ENCODE measurements at regions of chr1 and their contacts with region 1.

Region 1: GRCh38 chr1:67685067-67685557 is at the start of gene GADD45A:
- DNase-seq: peak; percentile 98
- H3K4me3 Mint-ChIP-seq: peak within 1 kb of the TSS; percentile 96
- H3K27ac Mint-ChIP-seq: peak within 1 kb of the TSS; percentile 89
- H3K4me1 Mint-ChIP-seq: peaks cover 40% of the 10 kb centered on the region
- H3K27me3 Mint-ChIP-seq: no peaks in the 10 kb centered on the region
- CTCF ChIP-seq: no peak
- total RNA-seq, gene GADD45A: 34.0 and 35.4 TPM in 2 replicates

Region 2: DNA sequence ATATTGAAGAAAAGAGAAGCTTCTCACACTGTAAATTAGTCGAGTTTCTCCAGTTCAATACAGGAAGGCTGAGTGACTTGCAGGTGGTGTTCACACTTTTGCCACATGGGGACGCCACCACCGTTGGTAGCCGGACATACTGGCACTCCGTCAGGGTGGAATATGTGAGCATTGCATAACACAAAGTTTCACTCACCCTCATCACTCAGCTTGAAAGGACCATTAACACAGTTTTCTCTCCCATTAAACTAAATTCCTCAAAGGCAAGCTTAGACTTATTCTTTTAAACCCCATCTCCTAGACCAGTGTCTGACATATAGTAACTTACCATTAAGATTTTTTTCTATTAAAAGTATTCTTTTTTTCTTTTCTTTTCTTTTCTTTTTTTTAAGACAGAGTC is 149.6 kb before region 1 on chr1:
- CTCF ChIA-PET with region 1: interaction called, 3 read pairs
- intact Hi-C with region 1: loop called (anchors 10 kb)
- DNase-seq: peak; percentile 89
- H3K4me3 Mint-ChIP-seq: no peak overlapping the region
- H3K27ac Mint-ChIP-seq: no peak overlapping the region
- H3K4me1 Mint-ChIP-seq: no peaks in the 10 kb centered on the region
- H3K27me3 Mint-ChIP-seq: no peaks in the 10 kb centered on the region
- CTCF ChIP-seq: peak; percentile 83

Region 3: GRCh38 chr1:67561704-67562113 is 123.4 kb before region 1 on chr1:
- CTCF ChIA-PET with region 1: interaction called, 4 read pairs
- intact Hi-C with region 1: loop called (anchors 1 kb)
- DNase-seq: peak; percentile 96
- H3K4me3 Mint-ChIP-seq: no peak overlapping the region
- H3K27ac Mint-ChIP-seq: no peak overlapping the region
- H3K4me1 Mint-ChIP-seq: peaks cover 32% of the 10 kb centered on the region
- H3K27me3 Mint-ChIP-seq: no peaks in the 10 kb centered on the region
- CTCF ChIP-seq: peak; percentile 80

Region 4: DNA sequence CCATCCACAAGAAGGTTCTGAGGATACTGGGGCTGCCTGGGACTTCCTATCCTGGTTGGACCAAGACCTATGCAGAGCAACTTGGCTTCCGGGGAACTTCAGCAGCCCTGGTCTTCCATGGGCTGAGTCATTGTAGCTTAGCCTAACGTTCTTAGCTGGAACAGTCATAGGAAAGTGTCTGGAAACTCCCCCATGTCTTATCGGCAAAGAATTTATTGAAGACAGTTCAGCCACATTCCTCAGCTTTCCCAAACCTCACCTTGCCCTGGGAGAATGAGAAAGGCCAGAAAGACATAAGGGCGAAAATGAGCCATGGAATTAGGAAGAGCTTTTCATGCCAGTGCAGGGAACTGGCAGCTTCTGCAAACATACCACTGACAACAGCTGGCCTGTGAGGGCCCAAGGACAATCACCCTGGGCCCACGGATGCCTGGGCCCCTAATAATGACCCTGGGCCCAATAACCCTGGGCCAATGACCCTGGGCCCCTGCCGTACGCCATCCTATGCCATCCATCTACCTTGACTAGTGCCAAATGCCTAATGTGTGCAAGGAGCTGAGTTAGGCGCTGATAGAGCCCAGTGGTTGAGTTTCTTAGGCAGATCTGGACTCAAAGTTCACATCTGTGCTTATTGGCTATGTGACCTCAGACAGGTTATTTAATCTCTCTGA is 114.5 kb before region 1 on chr1:
- CTCF ChIA-PET with region 1: interaction called, 5 read pairs
- intact Hi-C with region 1: loop called (anchors 2 kb)
- DNase-seq: peak; percentile 35
- H3K4me3 Mint-ChIP-seq: no peak overlapping the region
- H3K27ac Mint-ChIP-seq: peak overlapping the region; percentile 66
- H3K4me1 Mint-ChIP-seq: peaks cover 40% of the 10 kb centered on the region
- H3K27me3 Mint-ChIP-seq: no peaks in the 10 kb centered on the region
- CTCF ChIP-seq: no peak

Region 5: DNA sequence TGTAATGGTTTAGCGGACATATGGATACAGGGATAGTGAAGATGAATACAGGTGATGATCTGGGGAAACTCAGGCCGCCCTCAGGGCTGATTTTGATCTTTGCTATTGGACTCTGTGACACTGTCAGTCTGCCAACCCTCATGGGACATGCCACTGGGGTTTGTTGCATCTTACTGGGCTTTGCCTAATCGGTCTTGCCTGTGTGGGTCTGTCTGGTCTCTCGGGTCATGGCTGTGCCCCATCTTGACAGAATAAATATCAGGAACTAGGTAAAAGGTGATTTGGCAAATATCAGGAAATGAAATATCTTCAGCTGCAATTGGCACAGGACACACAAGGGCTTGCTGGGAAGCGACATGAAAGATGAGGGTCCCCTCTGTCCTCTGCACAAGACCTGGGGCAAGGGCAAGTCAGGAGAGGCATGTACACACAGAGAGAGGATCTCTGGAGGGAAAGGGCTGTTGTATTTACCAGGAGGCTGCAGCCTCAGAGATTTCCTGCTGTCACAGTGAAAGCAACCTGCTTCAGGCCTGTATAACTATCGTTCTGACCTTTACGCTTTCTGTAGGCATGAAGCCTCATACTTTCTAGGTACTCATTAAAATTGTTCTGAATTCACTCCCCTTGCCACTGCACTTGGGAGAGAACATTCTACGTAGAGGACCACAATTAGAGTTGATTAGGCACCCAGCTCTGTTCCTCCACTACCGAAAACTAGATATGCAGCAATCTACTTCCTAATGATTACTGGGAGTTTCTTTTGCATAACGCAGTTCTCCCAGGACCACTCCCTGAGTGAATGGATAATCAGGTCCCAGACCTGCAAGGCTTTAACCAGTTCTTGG is 52.1 kb before region 1 on chr1:
- CTCF ChIA-PET with region 1: no interaction called
- intact Hi-C with region 1: loop called (anchors 2 kb)
- DNase-seq: no peak
- H3K4me3 Mint-ChIP-seq: no peak overlapping the region
- H3K27ac Mint-ChIP-seq: no peak overlapping the region
- H3K4me1 Mint-ChIP-seq: peaks cover 54% of the 10 kb centered on the region
- H3K27me3 Mint-ChIP-seq: no peaks in the 10 kb centered on the region
- CTCF ChIP-seq: no peak

Region 6: DNA sequence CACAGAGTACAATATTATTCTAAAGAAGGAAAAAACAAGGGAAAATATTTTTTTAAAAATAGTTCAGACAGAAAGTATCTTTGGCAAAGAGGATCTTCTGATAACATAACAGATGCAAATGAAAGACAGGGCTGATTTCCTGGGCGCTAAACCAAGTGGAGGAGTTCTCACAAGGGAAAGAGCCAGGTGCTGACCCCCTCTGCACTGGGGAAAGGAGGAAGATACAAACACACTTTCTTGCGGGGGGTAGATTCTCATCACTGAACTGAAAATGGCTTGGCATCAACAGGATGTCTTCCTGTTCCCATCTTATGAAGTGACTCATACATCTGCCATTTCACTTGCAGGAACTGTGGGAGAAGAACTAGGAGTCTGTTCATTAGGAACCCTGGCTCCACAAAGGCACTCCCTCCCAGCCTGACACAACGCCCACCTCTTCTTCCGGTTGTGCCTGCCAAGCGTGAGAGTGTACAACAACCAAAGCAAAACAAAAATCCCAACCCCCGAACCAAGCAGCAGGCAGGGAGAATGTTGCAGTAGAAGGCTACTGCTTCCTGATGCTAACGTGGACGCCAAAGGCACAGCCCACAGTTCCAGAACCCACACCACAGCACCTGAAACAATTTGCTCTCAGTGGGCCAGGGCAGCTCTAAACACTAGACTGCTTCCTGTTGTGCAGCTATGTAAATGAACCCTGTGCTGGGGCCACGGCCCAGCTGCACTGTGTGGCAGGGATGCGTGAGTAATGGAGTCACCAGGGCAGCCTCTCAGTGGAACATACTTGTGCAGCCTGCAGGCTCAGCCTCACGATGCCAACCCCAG is 50.9 kb after region 1 on chr1:
- CTCF ChIA-PET with region 1: no interaction called
- intact Hi-C with region 1: no loop called
- DNase-seq: peak; percentile 74
- H3K4me3 Mint-ChIP-seq: peak overlapping the region; percentile 60
- H3K27ac Mint-ChIP-seq: peak overlapping the region; percentile 88
- H3K4me1 Mint-ChIP-seq: peaks cover 22% of the 10 kb centered on the region
- H3K27me3 Mint-ChIP-seq: no peaks in the 10 kb centered on the region
- CTCF ChIP-seq: no peak

Region 7: GRCh38 chr1:67748630-67749029 is 63.5 kb after region 1 on chr1:
- CTCF ChIA-PET with region 1: interaction called, 8 read pairs
- intact Hi-C with region 1: loop called (anchors 2 kb)
- DNase-seq: peak; percentile 28
- H3K4me3 Mint-ChIP-seq: peak overlapping the region; percentile 54
- H3K27ac Mint-ChIP-seq: peak overlapping the region; percentile 54
- H3K4me1 Mint-ChIP-seq: peaks cover 90% of the 10 kb centered on the region
- H3K27me3 Mint-ChIP-seq: no peaks in the 10 kb centered on the region
- CTCF ChIP-seq: no peak

Region 8: GRCh38 chr1:67760030-67760821 is 75.1 kb after region 1 on chr1:
- CTCF ChIA-PET with region 1: interaction called, 11 read pairs
- intact Hi-C with region 1: no loop called
- DNase-seq: peak; percentile 67
- H3K4me3 Mint-ChIP-seq: no peak overlapping the region
- H3K27ac Mint-ChIP-seq: no peak overlapping the region
- H3K4me1 Mint-ChIP-seq: peaks cover 39% of the 10 kb centered on the region
- H3K27me3 Mint-ChIP-seq: no peaks in the 10 kb centered on the region
- CTCF ChIP-seq: peak; percentile 53